A673 (cell line): ENCODE measurements at regions of chr2 and their contacts with region 1.

Region 1: DNA sequence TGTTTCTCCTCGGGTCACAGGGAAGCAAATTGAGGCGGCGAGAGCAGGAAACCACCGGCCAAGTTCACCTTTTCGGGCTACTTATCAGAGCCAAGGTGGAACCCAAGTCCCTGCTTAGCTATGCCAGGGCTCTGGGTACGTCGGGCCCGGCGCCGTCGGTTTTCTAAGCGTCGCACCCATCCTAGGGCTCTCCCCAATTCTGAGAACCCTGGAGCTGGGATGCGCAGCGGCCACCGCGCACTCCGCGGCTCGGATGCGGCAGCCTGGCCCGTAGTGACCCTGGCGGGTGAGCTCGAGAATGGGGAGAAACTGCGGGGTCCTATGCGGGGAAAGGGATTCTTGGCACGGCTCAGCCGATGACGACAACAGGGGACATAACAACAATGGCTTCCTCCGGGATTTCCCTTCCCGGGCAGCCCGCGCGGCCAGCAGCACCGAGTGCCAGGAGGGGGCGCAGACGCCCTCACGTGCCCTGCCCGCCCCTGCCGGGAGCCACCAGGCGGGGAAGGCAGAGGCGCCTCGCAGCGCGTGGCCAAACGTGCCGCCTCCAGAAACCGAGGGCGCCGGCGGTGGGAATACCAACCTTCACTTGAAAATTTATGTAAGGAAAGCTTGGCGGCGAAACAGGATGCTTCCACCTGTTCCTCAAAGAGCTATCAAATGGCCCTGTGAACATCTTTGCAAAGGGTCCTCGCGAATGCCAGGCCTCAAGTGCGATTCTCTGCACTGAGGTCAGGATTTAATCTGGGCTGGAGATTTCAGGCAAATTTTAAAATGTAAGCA is 2.1 kb upstream of the SLC30A3 start:
- DNase-seq: peak; percentile 91
- H3K4me3 ChIP-seq: peak overlapping the region; percentile 92
- H3K27ac ChIP-seq: no peak overlapping the region
- H3K4me1 ChIP-seq: peaks cover 11% of the 10 kb centered on the region
- H3K27me3 ChIP-seq: peaks cover 4% of the 10 kb centered on the region
- CTCF ChIP-seq: peak; percentile 91

Region 2: DNA sequence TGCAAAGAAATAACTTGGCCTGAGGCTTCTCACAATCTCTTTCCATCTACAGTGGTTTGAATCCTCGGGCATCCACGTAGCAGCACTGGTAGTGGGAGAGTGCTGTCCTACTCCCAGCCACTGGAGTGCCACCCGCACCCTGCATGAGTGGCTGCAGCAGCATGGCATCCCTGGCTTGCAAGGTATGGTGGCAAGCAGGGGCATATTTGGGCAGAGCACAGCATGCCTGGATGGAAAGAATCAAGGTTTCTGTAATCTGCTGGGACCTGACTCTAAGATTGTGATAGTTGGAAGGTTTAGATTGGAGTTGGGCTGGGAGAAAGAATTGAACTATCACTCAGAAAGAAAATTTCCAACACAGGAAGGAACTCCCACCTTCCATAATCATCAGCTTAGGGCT is 43.8 kb before region 1 on chr2:
- CTCF ChIA-PET with region 1: no interaction called
- POLR2A ChIA-PET with region 1: no interaction called
- intact Hi-C with region 1: loop called (anchors 5 kb)
- DNase-seq: peak; percentile 48
- H3K4me3 ChIP-seq: no peak overlapping the region
- H3K27ac ChIP-seq: peak overlapping the region; percentile 98
- H3K4me1 ChIP-seq: peaks cover 47% of the 10 kb centered on the region
- H3K27me3 ChIP-seq: no peaks in the 10 kb centered on the region
- CTCF ChIP-seq: no peak

Region 3: GRCh38 chr2:27281855-27282559 is 17.1 kb after region 1 on chr2 and contains the start of gene TRIM54:
- CTCF ChIA-PET with region 1: interaction called, 12 read pairs
- POLR2A ChIA-PET with region 1: no interaction called
- intact Hi-C with region 1: no loop called
- DNase-seq: peak; percentile 43
- H3K4me3 ChIP-seq: no peak within 1 kb of the TSS
- H3K27ac ChIP-seq: no peak within 1 kb of the TSS
- H3K4me1 ChIP-seq: peaks cover 16% of the 10 kb centered on the region
- H3K27me3 ChIP-seq: no peaks in the 10 kb centered on the region
- CTCF ChIP-seq: no peak
- total RNA-seq, gene TRIM54: 2.2 and 2.8 TPM in 2 replicates

Region 4: DNA sequence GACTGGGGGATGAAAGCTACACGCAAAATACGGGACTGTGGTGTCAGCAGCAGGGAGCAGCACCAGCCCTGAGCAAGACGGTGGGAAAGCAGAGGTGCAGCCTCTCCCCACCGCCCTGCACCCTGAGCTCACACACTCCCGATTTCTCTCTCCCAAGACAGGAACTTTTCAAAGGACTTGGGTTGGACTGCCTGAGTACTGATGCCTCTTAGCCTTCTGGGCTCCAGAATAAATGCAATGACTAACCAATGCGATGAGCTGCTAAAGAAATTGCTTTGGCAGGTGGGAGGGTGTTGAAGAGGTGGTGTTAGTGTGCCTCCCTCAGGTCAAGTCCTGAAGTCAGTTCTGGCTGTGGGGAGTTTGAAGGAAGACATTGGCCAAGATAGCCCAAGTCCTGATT is 26.9 kb after region 1 on chr2:
- CTCF ChIA-PET with region 1: interaction called, 11 read pairs
- POLR2A ChIA-PET with region 1: no interaction called
- intact Hi-C with region 1: no loop called
- DNase-seq: no peak
- H3K4me3 ChIP-seq: no peak overlapping the region
- H3K27ac ChIP-seq: no peak overlapping the region
- H3K4me1 ChIP-seq: peaks cover 16% of the 10 kb centered on the region
- H3K27me3 ChIP-seq: no peaks in the 10 kb centered on the region
- CTCF ChIP-seq: no peak; the same call in 1 of the 2 replicates

Region 5: DNA sequence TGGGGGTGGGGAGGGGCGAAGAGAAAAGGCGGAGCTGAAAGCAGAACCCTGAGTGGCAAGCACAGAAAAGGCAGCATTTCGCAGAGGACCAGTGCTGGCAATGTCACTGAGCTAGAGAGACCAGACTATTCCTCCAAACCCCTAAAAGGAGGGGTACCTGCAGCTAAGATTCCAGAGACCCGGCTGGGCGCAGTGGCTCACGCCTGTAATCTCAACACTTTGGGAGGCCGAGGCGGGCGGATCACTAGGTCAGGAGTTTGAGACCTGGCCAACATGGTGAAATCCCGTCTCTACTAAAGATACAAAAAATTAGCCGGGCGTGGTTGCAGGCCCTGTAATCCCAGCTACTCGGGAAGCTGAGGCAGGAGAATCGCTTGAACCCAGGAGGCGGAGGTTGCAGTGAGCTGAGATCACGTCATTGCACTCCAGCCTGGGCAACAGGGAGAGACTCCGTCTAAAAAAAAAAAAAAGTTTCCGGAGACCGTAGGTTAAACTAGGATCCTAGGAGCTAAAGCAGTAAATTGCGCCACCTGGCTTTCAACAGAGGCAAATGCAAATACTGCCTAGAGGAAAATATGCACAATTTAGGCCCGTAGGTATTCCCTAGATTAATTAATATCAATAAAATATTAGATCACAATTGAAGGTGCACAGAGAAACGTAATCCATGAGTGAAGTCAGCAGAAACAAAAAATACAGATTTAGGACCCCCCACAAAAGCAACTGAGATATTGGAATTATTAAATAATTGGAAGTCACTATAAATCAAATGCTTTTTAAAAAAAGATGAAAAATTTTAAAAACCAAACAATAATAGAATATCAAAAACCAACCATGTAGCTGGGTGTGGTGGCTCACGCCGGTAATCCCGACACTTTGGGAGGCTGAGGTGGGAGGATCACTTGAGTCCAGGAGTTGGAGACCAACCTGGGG is 38.4 kb after region 1 on chr2:
- CTCF ChIA-PET with region 1: interaction called, 5 read pairs
- POLR2A ChIA-PET with region 1: no interaction called
- intact Hi-C with region 1: loop called (anchors 5 kb)
- DNase-seq: peak; percentile 85
- H3K4me3 ChIP-seq: peak overlapping the region; percentile 37
- H3K27ac ChIP-seq: peak overlapping the region; percentile 17
- H3K4me1 ChIP-seq: peaks cover 15% of the 10 kb centered on the region
- H3K27me3 ChIP-seq: peaks cover 22% of the 10 kb centered on the region
- CTCF ChIP-seq: peak; percentile 88

Region 6: DNA sequence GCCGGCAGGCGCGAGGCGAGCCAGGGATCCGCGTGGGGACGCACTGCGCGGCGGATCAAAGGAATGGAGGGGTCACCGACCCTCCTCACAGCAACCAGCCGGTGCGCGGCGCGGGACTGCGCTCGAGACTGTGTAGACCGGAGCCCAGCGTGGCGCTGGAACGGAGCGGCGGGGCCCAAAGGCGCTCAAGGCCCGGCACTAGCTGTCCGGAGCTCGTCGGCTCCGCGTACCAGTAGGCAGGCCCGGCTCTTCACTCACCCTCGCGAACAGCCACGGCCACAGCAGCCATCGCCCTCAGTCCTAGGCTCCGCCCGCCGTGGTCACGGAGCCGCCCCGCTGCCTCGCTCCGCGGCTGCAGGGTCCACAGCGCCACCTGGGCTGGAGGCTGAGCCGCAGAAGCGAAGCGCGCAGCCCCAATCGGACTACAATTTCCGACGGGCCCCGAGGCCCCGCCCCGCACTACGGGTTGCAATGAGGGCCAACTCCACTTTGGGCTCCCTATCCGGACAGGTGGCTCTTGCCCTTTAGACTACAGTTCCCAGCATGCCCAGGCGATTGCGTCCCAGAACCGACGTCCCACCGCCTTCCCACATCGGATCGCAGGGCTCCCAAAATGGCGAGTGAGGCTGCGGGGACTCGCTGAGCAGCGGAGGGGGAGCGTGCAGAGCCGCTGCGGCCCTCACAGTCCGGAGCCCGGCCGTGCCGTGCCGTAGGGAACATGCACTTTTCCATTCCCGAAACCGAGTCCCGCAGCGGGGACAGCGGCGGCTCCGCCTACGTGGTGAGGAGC is 105.3 kb after region 1 on chr2 and contains the starts of genes EIF2B4 and SNX17:
- CTCF ChIA-PET with region 1: no interaction called
- POLR2A ChIA-PET with region 1: no interaction called
- intact Hi-C with region 1: loop called (anchors 5 kb)
- DNase-seq: peak; percentile 100
- H3K4me3 ChIP-seq: peak within 1 kb of the TSS; percentile 95
- H3K27ac ChIP-seq: peak within 1 kb of the TSS; percentile 94
- H3K4me1 ChIP-seq: peaks cover 17% of the 10 kb centered on the region
- H3K27me3 ChIP-seq: no peaks in the 10 kb centered on the region
- CTCF ChIP-seq: peak; percentile 93
- total RNA-seq, gene EIF2B4: 68.8 and 74.7 TPM in 2 replicates
- total RNA-seq, gene SNX17: 109 and 110 TPM in 2 replicates

Region 7: GRCh38 chr2:27489498-27490397 is 224.8 kb after region 1 on chr2 and contains the start of gene IFT172:
- CTCF ChIA-PET with region 1: no interaction called
- POLR2A ChIA-PET with region 1: interaction called, 11 read pairs
- intact Hi-C with region 1: no loop called
- DNase-seq: peak; percentile 100
- H3K4me3 ChIP-seq: peak within 1 kb of the TSS; percentile 75
- H3K27ac ChIP-seq: peak within 1 kb of the TSS; percentile 60
- H3K4me1 ChIP-seq: no peaks in the 10 kb centered on the region
- H3K27me3 ChIP-seq: no peaks in the 10 kb centered on the region
- CTCF ChIP-seq: no peak
- total RNA-seq, gene IFT172: 42.2 and 50.4 TPM in 2 replicates